Pancreas (tissue), 10 donors: ENCODE measurements at regions of chr1 and their contacts with region 1.

Region 1: DNA sequence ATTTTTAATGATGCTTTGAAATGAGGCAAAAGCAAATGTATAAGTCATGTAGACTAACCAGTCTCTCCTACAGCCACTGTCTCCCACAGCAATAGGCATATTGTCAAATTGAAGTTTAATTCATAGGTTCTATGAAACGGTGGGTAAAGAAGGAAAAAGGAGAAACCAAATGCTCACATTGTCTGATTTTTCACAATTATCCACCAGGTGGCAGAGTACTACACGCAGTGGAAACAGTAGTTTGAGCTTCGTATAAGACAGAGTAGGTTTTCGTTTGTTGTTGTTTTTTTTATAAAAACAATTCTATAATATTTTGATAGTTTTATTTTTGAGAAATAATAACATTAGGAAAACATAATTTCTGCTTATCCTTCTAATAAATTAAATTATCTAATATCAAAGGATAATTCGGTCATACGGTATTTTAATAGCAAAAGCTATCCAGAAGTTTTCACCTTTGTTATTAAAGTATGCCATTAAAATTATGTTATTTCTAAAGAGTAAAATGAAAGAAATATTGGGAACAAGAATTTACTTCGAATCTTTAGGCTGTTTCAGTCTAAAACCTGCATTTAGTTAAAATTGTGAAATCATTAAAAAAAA is 39.1 kb downstream of the TYW3 start:
- DNase-seq: peak in 1 of 6 donors; percentile 15
- ATAC-seq: peak in 3 of 4 donors; percentile 70 to 82 (median 78)
- H3K4me3 ChIP-seq: no peak overlapping the region
- H3K27ac ChIP-seq: no peak overlapping the region
- H3K4me1 ChIP-seq: no peaks in the 10 kb centered on the region
- H3K27me3 ChIP-seq: peaks cover 0 to 7% (median 0%) of the 10 kb centered on the region in 4 donors
- CTCF ChIP-seq: peak in 3 of 4 donors; percentile 54 to 58 (median 56)

Region 2: GRCh38 chr1:75203415-75204277 is 431.6 kb after region 1 on chr1:
- intact Hi-C with region 1: loop called in 2 of 3 experiments (anchors 5 kb)
- DNase-seq: no peak
- ATAC-seq: peak; percentile 50 to 87 (median 84)
- H3K4me3 ChIP-seq: no peak overlapping the region
- H3K27ac ChIP-seq: no peak overlapping the region
- H3K4me1 ChIP-seq: peaks cover 0 to 3% (median 0%) of the 10 kb centered on the region in 3 donors
- H3K27me3 ChIP-seq: no peaks in the 10 kb centered on the region
- CTCF ChIP-seq: peak; percentile 12 to 57 (median 48)